Ovary (tissue), 10 donors: ENCODE measurements at regions of chr9 and their contacts with region 1.

Region 1: GRCh38 chr9:119556129-119556875 is 187.1 kb upstream of the BRINP1 start:
- DNase-seq: peak; percentile 50 to 87 (median 71)
- H3K4me3 ChIP-seq: peak overlapping the region; percentile 12
- H3K27ac ChIP-seq: no peak overlapping the region
- H3K4me1 ChIP-seq: peaks cover 1% of the 10 kb centered on the region
- H3K27me3 ChIP-seq: no peaks in the 10 kb centered on the region
- CTCF ChIP-seq: peak; percentile 52 to 77 (median 67)
- EP300 ChIP-seq: no peak
- POLR2A ChIP-seq: no peak

Region 2: DNA sequence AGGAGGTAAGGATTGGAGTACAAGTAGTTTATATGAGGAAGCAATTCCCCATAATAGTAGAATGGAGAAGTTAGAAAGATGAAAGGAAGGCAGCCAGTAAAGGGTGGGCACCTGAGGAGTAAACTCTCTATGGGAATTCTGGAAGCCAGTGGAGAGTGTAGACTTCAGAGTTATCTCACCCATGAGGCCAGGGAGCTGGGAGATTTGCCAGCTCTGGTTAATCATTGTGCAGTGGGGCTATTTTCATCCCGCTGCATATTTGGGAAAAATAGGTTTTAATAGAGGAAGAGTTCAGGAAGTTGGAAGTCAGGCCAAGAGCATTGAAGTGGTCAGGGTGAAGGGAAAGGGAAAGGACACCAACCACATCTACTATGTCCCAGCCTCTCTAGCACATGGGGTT is 55.3 kb after region 1 on chr9:
- intact Hi-C with region 1: no loop called
- DNase-seq: no peak
- H3K4me3 ChIP-seq: no peak overlapping the region
- H3K27ac ChIP-seq: no peak overlapping the region
- H3K4me1 ChIP-seq: no peaks in the 10 kb centered on the region
- H3K27me3 ChIP-seq: no peaks in the 10 kb centered on the region
- CTCF ChIP-seq: no peak
- EP300 ChIP-seq: no peak
- POLR2A ChIP-seq: no peak

Region 3: GRCh38 chr9:119968836-119969707 is 412.8 kb after region 1 on chr9:
- intact Hi-C with region 1: loop called in 2 of 4 experiments (anchors 5 kb)
- DNase-seq: peak; percentile 59 to 87 (median 72)
- H3K4me3 ChIP-seq: no peak overlapping the region
- H3K27ac ChIP-seq: no peak overlapping the region
- H3K4me1 ChIP-seq: no peaks in the 10 kb centered on the region
- H3K27me3 ChIP-seq: no peaks in the 10 kb centered on the region
- CTCF ChIP-seq: peak; percentile 37 to 69 (median 41)
- EP300 ChIP-seq: no peak
- POLR2A ChIP-seq: no peak

Region 4: GRCh38 chr9:120477521-120478001 is 921.3 kb after region 1 on chr9:
- intact Hi-C with region 1: loop called in 2 of 4 experiments (anchors 10 kb)
- DNase-seq: peak; percentile 48 to 76 (median 69)
- H3K4me3 ChIP-seq: no peak overlapping the region
- H3K27ac ChIP-seq: no peak overlapping the region
- H3K4me1 ChIP-seq: peaks cover 2% of the 10 kb centered on the region
- H3K27me3 ChIP-seq: no peaks in the 10 kb centered on the region
- CTCF ChIP-seq: peak; percentile 65 to 79 (median 73)
- EP300 ChIP-seq: no peak
- POLR2A ChIP-seq: no peak